ENCODE measurements at regions of chr7 and their contacts with region 1.

Region 1: GRCh38 chr7:30348083-30348560 is 63.7 kb downstream of the ZNRF2 start:
- DNase-seq: peak in 8 of 9 donors; percentile 42 to 81 (median 72)
- ATAC-seq: peak; percentile 92
- H3K4me3 ChIP-seq: no peak overlapping the region
- H3K4me3 Mint-ChIP-seq: peak overlapping the region; percentile 19 to 92 (median 58)
- H3K27ac ChIP-seq: no peak overlapping the region
- H3K27ac Mint-ChIP-seq: peak overlapping the region; percentile 81 to 98 (median 90)
- H3K4me1 ChIP-seq: peaks cover 18 to 25% of the 10 kb centered on the region in 2 donors
- H3K4me1 Mint-ChIP-seq: peaks cover 32 to 69% (median 46%) of the 10 kb centered on the region in 7 donors
- H3K27me3 ChIP-seq: no peaks in the 10 kb centered on the region
- H3K27me3 Mint-ChIP-seq: no peaks in the 10 kb centered on the region

Region 2: DNA sequence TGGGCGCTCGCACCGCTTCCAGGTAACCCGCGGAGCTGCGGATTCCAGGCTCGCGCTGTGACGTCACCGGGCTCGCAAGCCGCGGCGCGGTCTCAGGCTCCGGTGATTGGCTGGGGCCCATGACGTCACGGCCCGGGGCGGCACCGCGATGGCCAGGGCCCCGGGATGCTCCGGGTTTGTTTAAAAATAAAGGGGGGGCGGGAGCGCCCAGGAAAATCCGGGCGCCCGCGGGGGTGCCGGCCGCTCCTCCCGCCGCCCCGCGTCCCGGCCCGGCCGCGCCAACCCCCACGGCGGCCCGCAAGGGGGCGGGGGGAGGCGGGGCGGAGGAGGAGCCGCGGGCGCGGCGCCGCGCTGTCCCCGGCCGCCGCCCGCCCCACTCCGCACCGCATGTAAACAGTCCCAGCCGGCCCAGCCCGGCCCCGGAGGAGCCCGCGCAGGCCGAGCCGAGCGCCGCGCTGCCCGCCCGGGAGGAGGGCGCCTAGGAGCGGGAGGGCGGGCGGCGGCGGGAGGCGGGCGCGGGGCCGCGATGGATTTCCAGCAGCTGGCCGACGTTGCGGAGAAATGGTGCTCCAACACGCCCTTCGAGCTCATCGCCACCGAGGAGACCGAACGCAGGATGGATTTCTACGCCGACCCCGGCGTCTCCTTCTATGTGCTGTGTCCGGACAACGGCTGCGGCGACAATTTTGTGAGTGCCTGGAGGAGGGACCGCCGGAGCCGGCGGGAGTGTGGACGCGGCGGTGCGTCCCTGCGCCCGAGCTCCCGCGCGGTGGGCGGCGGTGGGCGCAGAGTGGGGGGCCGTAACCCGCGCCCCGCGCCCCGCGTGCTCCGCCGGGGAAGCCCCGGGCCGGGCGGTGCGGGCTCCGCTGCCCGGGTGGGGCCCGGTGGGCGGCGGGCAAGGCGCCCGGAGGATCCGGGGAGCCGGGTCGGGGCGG is 213.2 kb before region 1 on chr7 and contains the start of gene MTURN:
- CTCF ChIA-PET with region 1: interaction called, 3 read pairs
- POLR2A ChIA-PET with region 1: interaction called, 6 read pairs
- intact Hi-C with region 1: loop called (anchors 1 to 10 kb)
- DNase-seq: peak; percentile 80 to 91 (median 88)
- ATAC-seq: peak; percentile 89
- H3K4me3 ChIP-seq: peak within 1 kb of the TSS; percentile 86
- H3K4me3 Mint-ChIP-seq: peak within 1 kb of the TSS; percentile 87 to 95 (median 92)
- H3K27ac ChIP-seq: peak within 1 kb of the TSS; percentile 77
- H3K27ac Mint-ChIP-seq: peak within 1 kb of the TSS; percentile 65 to 95 (median 91)
- H3K4me1 ChIP-seq: peaks cover 0 to 8% of the 10 kb centered on the region in 2 donors
- H3K4me1 Mint-ChIP-seq: peaks cover 0 to 16% (median 6%) of the 10 kb centered on the region in 7 donors
- H3K27me3 ChIP-seq: no peaks in the 10 kb centered on the region
- H3K27me3 Mint-ChIP-seq: peaks cover 0 to 47% (median 0%) of the 10 kb centered on the region in 5 donors
- total RNA-seq, gene MTURN: 2.7 to 38.7 (median 20.2) TPM

Region 3: GRCh38 chr7:30276203-30276900 is 71.8 kb before region 1 on chr7:
- CTCF ChIA-PET with region 1: interaction called, 58 read pairs
- POLR2A ChIA-PET with region 1: interaction called, 3 read pairs
- intact Hi-C with region 1: loop called (anchors 1 kb)
- DNase-seq: peak; percentile 10 to 66 (median 40)
- ATAC-seq: peak; percentile 79
- H3K4me3 ChIP-seq: no peak overlapping the region
- H3K4me3 Mint-ChIP-seq: no peak overlapping the region
- H3K27ac ChIP-seq: no peak overlapping the region
- H3K27ac Mint-ChIP-seq: peak overlapping the region in 1 of 9 donors; percentile 10
- H3K4me1 ChIP-seq: no peaks in the 10 kb centered on the region
- H3K4me1 Mint-ChIP-seq: peaks cover 0 to 9% (median 4%) of the 10 kb centered on the region in 7 donors
- H3K27me3 ChIP-seq: no peaks in the 10 kb centered on the region
- H3K27me3 Mint-ChIP-seq: peaks cover 0 to 4% (median 0%) of the 10 kb centered on the region in 5 donors

Region 4: GRCh38 chr7:30330134-30331111 is 17.7 kb before region 1 on chr7:
- CTCF ChIA-PET with region 1: no interaction called
- POLR2A ChIA-PET with region 1: interaction called, 6 read pairs
- intact Hi-C with region 1: loop called (anchors 1 kb)
- DNase-seq: peak in 7 of 9 donors; percentile 38 to 73 (median 62)
- ATAC-seq: peak; percentile 95
- H3K4me3 ChIP-seq: no peak overlapping the region
- H3K4me3 Mint-ChIP-seq: peak overlapping the region; percentile 9 to 82 (median 73)
- H3K27ac ChIP-seq: peak overlapping the region; percentile 11
- H3K27ac Mint-ChIP-seq: peak overlapping the region; percentile 33 to 86 (median 68)
- H3K4me1 ChIP-seq: peaks cover 21% of the 10 kb centered on the region in 2 donors
- H3K4me1 Mint-ChIP-seq: peaks cover 35 to 69% (median 57%) of the 10 kb centered on the region in 7 donors
- H3K27me3 ChIP-seq: no peaks in the 10 kb centered on the region
- H3K27me3 Mint-ChIP-seq: peaks cover 0 to 2% (median 0%) of the 10 kb centered on the region in 5 donors

Region 5: DNA sequence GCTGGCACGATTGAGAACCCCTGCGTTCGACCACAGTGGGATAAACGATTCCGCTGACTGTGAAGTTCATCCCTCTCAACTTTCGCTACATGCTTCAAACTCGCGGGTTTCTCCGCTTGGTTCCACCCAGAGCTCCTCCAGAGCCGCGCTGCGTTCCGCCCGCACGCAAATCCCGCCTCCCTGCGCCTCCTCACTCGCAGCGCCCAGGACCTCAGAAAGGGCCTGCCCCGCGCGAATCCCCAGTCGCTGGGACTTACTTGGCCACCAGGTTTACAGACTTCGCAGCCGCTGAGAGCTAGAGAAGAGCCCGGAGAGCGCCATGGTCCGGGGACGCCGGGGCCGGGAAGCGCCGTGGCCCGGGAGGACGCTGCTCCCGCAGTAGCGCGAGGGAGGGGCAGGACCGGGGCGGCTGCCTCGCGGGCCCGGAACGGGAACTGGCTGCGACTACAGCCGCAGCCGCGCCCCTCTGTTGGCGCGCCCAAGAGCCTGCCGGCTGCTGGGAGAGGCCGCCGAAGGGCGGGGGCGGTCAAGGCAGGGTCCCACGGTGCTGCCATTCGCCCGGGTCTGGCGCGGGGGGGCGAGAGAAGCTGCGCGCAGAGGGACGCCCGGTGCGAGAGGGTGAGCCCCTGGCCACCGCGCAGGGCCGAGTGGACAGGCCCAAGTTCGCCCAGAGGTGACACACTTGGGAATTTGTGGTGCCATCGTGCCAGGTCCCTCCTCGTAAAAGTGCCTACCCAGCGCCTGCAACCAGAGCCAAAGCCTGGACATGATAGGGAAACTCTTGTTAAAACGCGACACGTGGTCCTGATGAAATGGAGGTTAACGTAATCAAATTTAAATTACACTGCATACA is 130.5 kb after region 1 on chr7 and contains the start of gene NOD1:
- CTCF ChIA-PET with region 1: interaction called, 3 read pairs
- POLR2A ChIA-PET with region 1: interaction called, 7 read pairs
- intact Hi-C with region 1: loop called (anchors 1 to 2 kb)
- DNase-seq: peak; percentile 50 to 80 (median 65)
- ATAC-seq: peak; percentile 91
- H3K4me3 ChIP-seq: peak within 1 kb of the TSS; percentile 64
- H3K4me3 Mint-ChIP-seq: peak within 1 kb of the TSS in 9 of 10 donors; percentile 92 to 95 (median 94)
- H3K27ac ChIP-seq: peak within 1 kb of the TSS; percentile 80
- H3K27ac Mint-ChIP-seq: peak within 1 kb of the TSS in 6 of 9 donors; percentile 73 to 95 (median 90)
- H3K4me1 ChIP-seq: peaks cover 10 to 19% of the 10 kb centered on the region in 2 donors
- H3K4me1 Mint-ChIP-seq: peaks cover 22 to 54% (median 47%) of the 10 kb centered on the region in 7 donors
- H3K27me3 ChIP-seq: no peaks in the 10 kb centered on the region
- H3K27me3 Mint-ChIP-seq: no peaks in the 10 kb centered on the region
- total RNA-seq, gene NOD1: 17.3 to 24.6 (median 19.2) TPM

Region 6: DNA sequence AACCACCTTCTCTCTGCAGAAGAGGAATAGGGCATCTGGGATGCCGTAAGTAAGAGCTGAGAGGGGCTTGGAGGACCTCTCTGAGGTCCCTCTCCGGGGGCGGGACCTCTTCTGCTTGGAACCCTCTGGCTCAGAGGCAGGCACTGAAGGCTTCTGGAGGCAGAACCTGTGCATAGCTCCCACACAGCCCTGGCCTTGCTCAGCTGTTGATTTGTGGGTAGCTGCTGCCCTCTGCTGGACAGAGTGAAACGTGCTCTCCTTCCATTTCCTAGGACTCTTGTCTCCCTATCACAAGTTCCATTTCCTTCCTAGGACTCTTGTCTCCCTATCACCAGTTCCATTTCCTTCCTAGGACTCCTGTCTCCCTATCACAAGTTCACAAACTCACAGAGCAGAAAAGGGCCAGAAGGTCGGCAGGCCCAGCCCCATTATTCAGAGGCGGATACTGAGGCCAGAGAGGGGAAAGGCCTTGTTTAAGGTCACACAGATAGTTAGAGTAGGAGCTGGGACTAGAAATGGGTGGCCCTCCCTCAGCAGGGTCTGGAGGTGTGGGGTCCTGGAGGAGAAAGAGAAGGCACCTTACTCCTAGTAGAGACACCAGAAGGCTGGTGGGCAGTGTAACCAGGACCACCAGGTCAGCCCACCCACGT is 216.2 kb after region 1 on chr7:
- CTCF ChIA-PET with region 1: interaction called, 4 read pairs
- POLR2A ChIA-PET with region 1: interaction called, 3 read pairs
- intact Hi-C with region 1: loop called in 1 of 2 experiments (anchors 10 kb)
- DNase-seq: peak; percentile 45 to 77 (median 66)
- ATAC-seq: peak; percentile 98
- H3K4me3 ChIP-seq: no peak overlapping the region
- H3K4me3 Mint-ChIP-seq: peak overlapping the region in 1 of 10 donors; percentile 9
- H3K27ac ChIP-seq: no peak overlapping the region
- H3K27ac Mint-ChIP-seq: peak overlapping the region in 3 of 9 donors; percentile 3 to 39 (median 5)
- H3K4me1 ChIP-seq: no peaks in the 10 kb centered on the region
- H3K4me1 Mint-ChIP-seq: peaks cover 0 to 4% (median 0%) of the 10 kb centered on the region in 7 donors
- H3K27me3 ChIP-seq: no peaks in the 10 kb centered on the region
- H3K27me3 Mint-ChIP-seq: no peaks in the 10 kb centered on the region